Right ventricle myocardium inferior (tissue), 1 donor: ENCODE measurements at regions of chr9 and their contacts with region 1.

Region 1: DNA sequence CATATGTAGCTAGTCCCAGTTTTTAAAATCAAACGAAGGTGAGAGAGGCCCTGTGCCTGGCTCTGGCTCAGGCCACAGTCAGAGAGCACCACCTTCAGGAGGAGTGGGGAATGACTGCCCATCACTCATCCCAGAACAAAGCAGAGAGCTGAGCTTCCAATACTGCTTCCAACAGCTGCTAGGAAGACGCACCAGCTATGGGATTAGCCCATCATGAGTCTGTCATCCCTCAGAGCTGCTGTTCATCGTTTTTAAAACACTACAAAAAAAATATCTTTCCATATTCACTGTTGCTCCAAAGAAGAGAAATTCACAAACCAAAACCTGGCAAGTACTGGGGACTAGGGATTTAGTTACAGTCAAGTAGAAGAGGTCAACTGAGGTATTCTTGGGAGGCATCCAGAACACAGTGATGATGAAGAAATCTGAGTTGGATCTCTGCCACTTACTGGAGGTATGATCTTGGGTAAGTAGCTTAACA is 102.4 kb downstream of the CDK5RAP2 start:
- DNase-seq: peak; percentile 65
- ATAC-seq: peak; percentile 91

Region 2: DNA sequence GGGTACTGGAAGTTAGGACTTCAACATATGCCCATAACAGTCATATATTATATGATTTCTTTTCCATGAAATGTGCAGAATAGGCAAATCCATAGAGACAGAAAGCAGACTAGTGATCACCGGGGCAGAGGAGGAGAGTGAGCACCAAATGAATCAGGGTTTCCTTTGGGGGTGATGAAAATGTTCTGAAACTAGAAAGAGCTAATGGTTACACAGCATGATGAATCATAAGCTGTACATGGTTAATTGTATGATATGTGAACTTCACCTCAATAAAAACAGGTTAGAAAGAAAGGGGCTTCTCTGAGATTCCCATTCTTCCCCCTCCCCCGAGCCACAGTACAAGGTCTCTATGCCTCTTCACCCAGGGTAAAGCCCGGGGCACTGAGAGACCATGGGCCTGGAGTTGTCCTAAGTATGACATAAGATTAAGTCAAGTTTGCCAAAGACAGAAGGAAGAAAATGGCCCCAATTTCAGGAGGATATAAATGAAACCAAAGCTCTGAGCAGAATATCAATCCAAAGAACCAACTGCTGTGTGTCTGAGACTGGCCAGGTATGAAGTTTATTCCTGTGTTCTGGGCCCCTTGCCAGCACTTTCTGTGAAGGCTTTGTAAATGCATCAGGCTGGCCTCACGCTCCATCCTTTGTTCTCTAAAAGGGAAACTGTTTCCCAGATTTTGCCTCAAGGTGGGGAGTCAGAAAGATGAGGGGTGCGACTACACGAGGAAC is 141.4 kb before region 1 on chr9:
- intact Hi-C with region 1: no loop called
- DNase-seq: no peak
- ATAC-seq: no peak

Region 3: DNA sequence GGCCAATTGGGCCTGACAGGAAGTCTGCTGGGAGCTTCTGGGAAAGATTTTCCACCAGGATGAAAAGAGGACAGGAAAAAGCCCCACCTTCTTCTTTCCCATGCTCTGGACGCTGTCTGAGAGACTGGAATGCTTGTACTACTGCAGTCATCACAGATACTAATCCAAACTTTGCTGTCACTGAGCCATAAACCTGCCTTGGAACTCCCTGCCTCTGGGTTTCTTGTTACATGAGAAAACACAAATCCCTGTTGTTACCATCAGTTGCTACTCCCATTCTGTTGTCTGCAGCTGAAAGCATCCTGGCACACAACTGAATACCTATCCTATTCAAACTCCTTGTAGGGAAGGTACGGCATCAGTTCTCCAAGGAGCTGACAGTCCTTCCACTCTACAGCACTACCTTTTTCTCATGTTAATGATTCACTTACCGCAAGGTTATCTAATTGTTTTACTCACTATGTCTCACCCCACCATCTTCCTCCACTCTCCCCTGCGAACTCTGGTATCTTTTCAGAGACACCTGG is 65.1 kb before region 1 on chr9:
- intact Hi-C with region 1: loop called (anchors 5 kb)
- DNase-seq: no peak
- ATAC-seq: peak; percentile 71

Region 4: GRCh38 chr9:120774722-120775121 is 297.2 kb after region 1 on chr9:
- intact Hi-C with region 1: no loop called
- DNase-seq: no peak
- ATAC-seq: no peak